ENCODE measurements at regions of chr1 and their contacts with region 1.

Region 1: GRCh38 chr1:192516776-192517297 is 58.7 kb upstream of the RGS1 start:
- DNase-seq: peak; percentile 89
- H3K4me3 ChIP-seq: peak overlapping the region; percentile 58
- H3K27ac ChIP-seq: peak overlapping the region; percentile 46
- H3K4me1 ChIP-seq: peaks cover 39% of the 10 kb centered on the region
- CTCF ChIP-seq: no peak

Region 2: GRCh38 chr1:192477630-192478029 is 39.2 kb before region 1 on chr1:
- CTCF ChIA-PET with region 1: no interaction called
- POLR2A ChIA-PET with region 1: no interaction called
- intact Hi-C with region 1: loop called (anchors 5 kb)
- DNase-seq: peak; percentile 58
- H3K4me3 ChIP-seq: no peak overlapping the region
- H3K27ac ChIP-seq: no peak overlapping the region
- H3K4me1 ChIP-seq: no peaks in the 10 kb centered on the region
- CTCF ChIP-seq: peak; percentile 90

Region 3: GRCh38 chr1:192539297-192540092 is 22.7 kb after region 1 on chr1:
- CTCF ChIA-PET with region 1: interaction called, 3 read pairs
- POLR2A ChIA-PET with region 1: interaction called, 26 read pairs
- intact Hi-C with region 1: no loop called
- DNase-seq: no peak
- H3K4me3 ChIP-seq: peak overlapping the region; percentile 51
- H3K27ac ChIP-seq: peak overlapping the region; percentile 86
- H3K4me1 ChIP-seq: peaks cover 36% of the 10 kb centered on the region
- CTCF ChIP-seq: no peak

Region 4: DNA sequence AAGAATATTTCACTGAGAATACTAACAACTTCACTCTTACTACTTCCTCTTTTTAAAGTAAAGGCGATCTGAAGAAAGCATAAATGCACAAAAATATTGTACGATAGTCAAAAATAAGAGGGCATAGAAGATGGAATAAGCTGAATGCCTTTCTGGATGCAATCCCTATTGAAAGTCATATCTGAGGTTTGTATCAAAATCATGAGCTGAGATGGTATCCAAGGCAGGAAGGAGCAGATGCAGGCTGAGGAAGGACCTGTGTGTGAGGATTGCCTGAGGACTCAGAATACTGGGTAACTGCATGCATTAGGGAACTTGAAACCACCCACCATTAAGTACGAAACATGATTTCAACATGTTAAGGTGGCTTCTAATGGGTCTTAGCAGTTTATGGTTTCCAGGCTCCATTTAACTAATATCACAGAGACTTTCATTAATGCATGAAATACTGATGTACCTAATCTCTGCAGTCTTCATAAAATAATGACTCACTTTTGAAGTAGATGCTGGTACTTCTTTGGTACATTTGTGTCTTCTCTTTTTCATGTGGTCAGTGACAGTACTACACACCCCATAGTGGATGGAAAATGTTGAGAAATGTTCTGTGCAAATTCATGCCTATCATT is 29.2 kb after region 1 on chr1:
- CTCF ChIA-PET with region 1: interaction called, 3 read pairs
- POLR2A ChIA-PET with region 1: interaction called, 26 read pairs
- intact Hi-C with region 1: no loop called
- DNase-seq: peak; percentile 52
- H3K4me3 ChIP-seq: peak overlapping the region; percentile 22
- H3K27ac ChIP-seq: peak overlapping the region; percentile 40
- H3K4me1 ChIP-seq: peaks cover 31% of the 10 kb centered on the region
- CTCF ChIP-seq: peak; percentile 55

Region 5: GRCh38 chr1:192592981-192593708 is 76.3 kb after region 1 on chr1:
- CTCF ChIA-PET with region 1: no interaction called
- POLR2A ChIA-PET with region 1: no interaction called
- intact Hi-C with region 1: no loop called
- DNase-seq: no peak
- H3K4me3 ChIP-seq: no peak overlapping the region
- H3K27ac ChIP-seq: no peak overlapping the region
- H3K4me1 ChIP-seq: no peaks in the 10 kb centered on the region
- CTCF ChIP-seq: no peak

Region 6: DNA sequence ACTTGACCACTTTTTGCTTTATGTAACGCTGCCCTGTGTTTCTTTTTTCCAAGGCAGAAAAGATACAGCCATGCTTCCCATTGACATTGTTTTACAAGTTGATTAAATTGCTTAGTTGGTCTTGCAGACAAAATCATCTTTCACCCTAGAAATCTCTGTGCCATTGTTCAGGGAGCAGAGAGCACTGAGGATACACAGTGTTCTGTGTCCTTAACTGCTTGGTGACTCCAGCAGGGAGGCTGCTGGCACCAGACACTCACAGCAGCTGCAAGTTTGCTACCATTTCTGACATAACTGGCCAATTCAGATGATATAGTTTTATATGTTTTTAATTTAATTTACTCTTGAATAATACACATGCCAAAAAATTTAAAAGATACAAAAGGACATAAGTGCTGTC is 410.7 kb after region 1 on chr1:
- CTCF ChIA-PET with region 1: no interaction called
- POLR2A ChIA-PET with region 1: no interaction called
- intact Hi-C with region 1: no loop called
- DNase-seq: no peak
- H3K4me3 ChIP-seq: no peak overlapping the region
- H3K27ac ChIP-seq: no peak overlapping the region
- H3K4me1 ChIP-seq: no peaks in the 10 kb centered on the region
- CTCF ChIP-seq: no peak

Measured in OCI-LY7 (cell line).